GM13976 (cell line): ENCODE measurements at regions of chr11 and their contacts with region 1.

Region 1: GRCh38 chr11:92941676-92942571 is 27.5 kb upstream of the MTNR1B start:
- DNase-seq: peak; percentile 64
- CTCF ChIP-seq: peak; percentile 42

Region 2: DNA sequence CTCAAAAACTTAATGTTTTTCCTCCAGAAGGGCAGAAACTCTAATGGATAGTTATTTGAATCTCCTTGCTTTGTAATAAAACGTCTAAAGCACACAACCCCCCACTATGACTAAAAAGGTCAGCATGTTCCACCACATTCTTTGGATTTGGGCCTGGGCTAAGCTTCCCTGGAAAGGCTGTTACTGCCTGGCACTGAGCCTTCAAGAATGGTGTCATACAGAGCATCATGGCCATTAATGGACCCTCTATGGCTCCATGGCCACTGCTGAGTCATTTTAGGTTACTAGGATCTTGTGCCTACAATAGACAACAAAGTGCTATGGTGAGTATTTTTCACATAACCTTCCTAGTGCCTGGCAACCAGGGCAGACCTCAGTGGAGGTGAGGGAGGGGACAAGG is 959.9 kb before region 1 on chr11:
- in situ Hi-C with region 1: no loop called
- DNase-seq: no peak
- CTCF ChIP-seq: no peak

Region 3: GRCh38 chr11:93219440-93219839 is 277.5 kb after region 1 on chr11:
- in situ Hi-C with region 1: loop called (anchors 25 kb)
- DNase-seq: no peak
- CTCF ChIP-seq: no peak